H1 (cell line): ENCODE measurements at regions of chr2 and their contacts with region 1.

Region 1: DNA sequence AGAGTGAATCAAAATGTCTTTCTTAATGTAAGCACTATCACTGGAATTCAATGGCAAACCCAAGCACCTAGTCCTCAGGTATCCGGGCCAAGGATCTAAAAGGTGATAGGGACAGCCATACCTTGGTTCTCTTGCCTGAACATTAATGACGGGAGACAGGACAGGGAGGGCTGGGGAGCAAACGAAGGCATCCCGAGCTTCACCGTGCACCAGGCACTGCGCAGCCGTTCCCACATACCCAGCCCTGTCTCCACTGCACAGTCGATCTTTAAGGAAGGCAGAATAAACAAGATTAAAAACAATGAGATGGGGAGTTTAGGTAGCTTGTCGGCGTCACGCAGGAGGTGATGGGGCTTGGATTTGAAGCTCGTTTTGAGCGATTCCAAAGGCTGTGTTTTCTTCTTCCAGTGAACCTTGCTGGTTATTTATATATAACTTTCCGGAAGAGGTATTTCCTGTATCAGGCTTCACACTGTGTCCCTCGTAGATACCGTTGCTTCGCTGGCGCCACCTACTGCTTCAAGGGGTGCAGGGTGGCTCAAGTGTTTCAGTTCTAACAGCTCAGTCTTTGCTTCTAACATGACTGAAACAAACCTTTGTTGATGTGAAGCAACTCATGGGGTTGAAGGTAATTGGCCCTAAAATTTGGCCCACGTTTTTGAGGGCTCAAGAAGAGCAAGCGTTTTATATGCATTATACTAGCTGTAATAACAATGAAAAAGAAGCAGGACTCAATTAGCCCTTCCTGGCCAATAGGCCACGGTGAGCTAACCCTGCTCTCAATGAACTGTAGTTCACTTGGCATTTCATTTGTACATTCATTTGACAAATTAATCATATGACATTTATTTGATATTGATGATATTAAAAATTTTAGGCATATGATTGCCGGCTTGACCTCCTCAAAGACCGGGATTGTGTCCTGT is 77.4 kb downstream of the DCDC2C start:
- DNase-seq: peak in 1 of 2 experiments; percentile 72
- H3K4me3 ChIP-seq: no peak overlapping the region
- H3K27ac ChIP-seq: no peak overlapping the region
- H3K4me1 ChIP-seq: peaks cover 0 to 9% (median 4%) of the 10 kb centered on the region in 4 experiments; a peak in 3 of 7 replicates
- H3K27me3 ChIP-seq: no peaks in the 10 kb centered on the region
- CTCF ChIP-seq: peak; percentile 73 to 85 (median 81)
- EP300 ChIP-seq: no peak
- POLR2A ChIP-seq: no peak
- RAD21 ChIP-seq: peak; percentile 67 to 74

Region 2: GRCh38 chr2:3493615-3494007 is 287.1 kb before region 1 on chr2:
- CTCF ChIA-PET with region 1: no interaction called
- POLR2A ChIA-PET with region 1: no interaction called
- DNase-seq: peak in 1 of 2 experiments; percentile 21
- H3K4me3 ChIP-seq: no peak overlapping the region
- H3K27ac ChIP-seq: no peak overlapping the region
- H3K4me1 ChIP-seq: peaks cover 0 to 9% (median 7%) of the 10 kb centered on the region in 4 experiments; a peak in 5 of 7 replicates
- H3K27me3 ChIP-seq: no peaks in the 10 kb centered on the region
- CTCF ChIP-seq: no peak
- EP300 ChIP-seq: no peak
- POLR2A ChIP-seq: no peak
- RAD21 ChIP-seq: no peak

Region 3: DNA sequence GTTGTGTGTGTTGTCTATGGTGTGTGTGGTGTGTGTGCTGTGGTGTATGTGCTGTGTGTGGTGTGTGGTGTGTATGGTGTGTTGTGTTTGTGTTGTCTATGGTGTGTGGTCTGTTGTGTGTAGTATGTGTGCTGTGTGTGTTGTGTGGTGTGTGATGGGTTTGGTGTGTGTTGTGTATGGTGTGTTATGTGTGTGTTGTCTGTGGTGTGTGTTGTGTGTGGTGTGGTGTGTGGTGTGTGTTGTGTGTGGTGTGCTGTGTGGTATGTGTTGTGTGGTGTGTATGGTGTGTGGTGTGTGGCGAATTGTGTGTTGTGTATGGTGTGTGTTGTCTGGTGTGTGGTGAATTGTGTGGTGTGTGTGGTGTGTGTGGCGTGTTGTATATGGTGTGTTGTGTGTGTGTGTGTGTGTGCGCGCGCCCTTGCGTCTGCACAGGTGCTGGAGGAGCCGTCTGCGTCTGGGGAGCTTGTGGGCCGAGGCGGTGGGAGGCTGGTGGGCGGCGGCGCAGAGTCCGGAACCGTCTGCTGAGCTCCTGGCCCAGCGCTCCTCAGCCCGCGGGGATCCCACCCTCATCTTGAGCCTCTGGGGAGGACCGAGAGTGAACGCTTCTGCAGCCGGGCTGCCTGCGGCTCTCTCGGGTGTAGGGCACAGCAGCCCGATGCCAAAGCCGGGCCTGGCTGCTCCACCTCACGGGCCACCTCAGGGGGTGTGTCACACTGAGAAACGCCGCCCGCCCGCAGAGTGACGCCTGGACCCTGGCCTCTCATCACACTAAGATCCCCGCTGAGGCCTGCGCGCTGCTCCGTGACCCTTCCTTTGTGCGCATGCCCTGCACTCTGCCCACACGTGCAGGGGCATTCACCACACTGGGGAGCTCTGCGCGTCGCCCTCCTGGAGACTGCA is 252.6 kb before region 1 on chr2:
- CTCF ChIA-PET with region 1: no interaction called
- POLR2A ChIA-PET with region 1: no interaction called
- DNase-seq: peak in 1 of 2 experiments; percentile 32
- H3K4me3 ChIP-seq: no peak overlapping the region
- H3K27ac ChIP-seq: no peak overlapping the region
- H3K4me1 ChIP-seq: peaks cover 0 to 4% (median 0%) of the 10 kb centered on the region in 4 experiments; a peak in 1 of 7 replicates
- H3K27me3 ChIP-seq: no peaks in the 10 kb centered on the region
- CTCF ChIP-seq: no peak
- EP300 ChIP-seq: no peak
- POLR2A ChIP-seq: no peak
- RAD21 ChIP-seq: no peak

Region 4: GRCh38 chr2:3628800-3629199 is 151.9 kb before region 1 on chr2:
- CTCF ChIA-PET with region 1: no interaction called
- POLR2A ChIA-PET with region 1: no interaction called
- DNase-seq: peak; percentile 21 to 78
- H3K4me3 ChIP-seq: no peak overlapping the region
- H3K27ac ChIP-seq: no peak overlapping the region
- H3K4me1 ChIP-seq: no peaks in the 10 kb centered on the region; a peak in 2 of 7 replicates
- H3K27me3 ChIP-seq: no peaks in the 10 kb centered on the region; a peak in 1 of 7 replicates
- CTCF ChIP-seq: peak in 2 of 3 experiments; percentile 57 to 78; a peak in 3 of 4 replicates
- EP300 ChIP-seq: no peak
- POLR2A ChIP-seq: no peak
- RAD21 ChIP-seq: peak; percentile 64 to 71

Region 5: DNA sequence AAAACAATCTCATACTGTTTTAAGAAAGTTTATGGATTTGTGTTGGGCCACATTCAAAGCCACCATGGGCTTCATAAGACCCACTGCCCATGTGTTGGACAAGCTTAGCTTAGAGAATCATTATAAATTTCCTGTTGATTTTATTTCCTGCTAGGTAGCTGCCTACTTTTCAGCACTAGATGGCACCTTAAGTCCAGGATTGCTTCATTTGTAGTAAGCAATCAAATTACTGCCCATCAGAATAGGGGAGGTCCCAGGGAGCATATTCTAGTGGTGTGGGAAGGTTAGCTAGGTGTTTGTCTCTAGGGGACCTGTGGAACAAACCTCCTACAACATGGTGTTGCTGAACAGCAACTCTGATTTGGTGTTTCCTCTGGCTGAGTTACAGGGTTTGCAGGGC is 88.4 kb before region 1 on chr2:
- CTCF ChIA-PET with region 1: interaction called, 11 read pairs
- POLR2A ChIA-PET with region 1: no interaction called
- DNase-seq: peak in 1 of 2 experiments; percentile 48
- H3K4me3 ChIP-seq: no peak overlapping the region
- H3K27ac ChIP-seq: no peak overlapping the region
- H3K4me1 ChIP-seq: no peaks in the 10 kb centered on the region
- H3K27me3 ChIP-seq: no peaks in the 10 kb centered on the region; a peak in 1 of 7 replicates
- CTCF ChIP-seq: peak in 2 of 3 experiments; percentile 67 to 75; a peak in 3 of 4 replicates
- EP300 ChIP-seq: no peak
- POLR2A ChIP-seq: no peak
- RAD21 ChIP-seq: peak; percentile 94

Region 6: DNA sequence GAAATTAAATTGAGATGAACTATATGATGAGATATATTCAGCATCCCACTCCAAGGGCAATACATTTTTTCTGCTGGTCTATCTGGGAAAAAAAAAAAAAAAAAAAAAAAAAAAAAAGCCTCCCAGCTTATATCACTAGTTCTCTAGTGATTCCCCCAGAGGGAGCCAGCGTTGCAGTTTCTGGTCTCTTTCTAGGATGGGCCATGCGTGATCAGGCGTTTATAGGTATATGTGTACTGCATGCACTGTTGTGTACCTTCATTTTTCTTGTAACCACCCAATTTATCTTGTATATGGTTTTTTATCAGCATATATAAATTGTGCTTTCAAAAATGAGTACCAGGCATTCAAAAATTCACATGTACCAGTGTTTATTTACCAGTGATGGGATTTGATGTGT is 42.3 kb before region 1 on chr2:
- CTCF ChIA-PET with region 1: interaction called, 63 read pairs
- POLR2A ChIA-PET with region 1: no interaction called
- DNase-seq: no peak
- H3K4me3 ChIP-seq: no peak overlapping the region
- H3K27ac ChIP-seq: no peak overlapping the region
- H3K4me1 ChIP-seq: no peaks in the 10 kb centered on the region
- H3K27me3 ChIP-seq: no peaks in the 10 kb centered on the region; a peak in 1 of 7 replicates
- CTCF ChIP-seq: peak; percentile 24 to 76 (median 51)
- EP300 ChIP-seq: no peak
- POLR2A ChIP-seq: no peak
- RAD21 ChIP-seq: peak; percentile 78 to 79

Region 7: DNA sequence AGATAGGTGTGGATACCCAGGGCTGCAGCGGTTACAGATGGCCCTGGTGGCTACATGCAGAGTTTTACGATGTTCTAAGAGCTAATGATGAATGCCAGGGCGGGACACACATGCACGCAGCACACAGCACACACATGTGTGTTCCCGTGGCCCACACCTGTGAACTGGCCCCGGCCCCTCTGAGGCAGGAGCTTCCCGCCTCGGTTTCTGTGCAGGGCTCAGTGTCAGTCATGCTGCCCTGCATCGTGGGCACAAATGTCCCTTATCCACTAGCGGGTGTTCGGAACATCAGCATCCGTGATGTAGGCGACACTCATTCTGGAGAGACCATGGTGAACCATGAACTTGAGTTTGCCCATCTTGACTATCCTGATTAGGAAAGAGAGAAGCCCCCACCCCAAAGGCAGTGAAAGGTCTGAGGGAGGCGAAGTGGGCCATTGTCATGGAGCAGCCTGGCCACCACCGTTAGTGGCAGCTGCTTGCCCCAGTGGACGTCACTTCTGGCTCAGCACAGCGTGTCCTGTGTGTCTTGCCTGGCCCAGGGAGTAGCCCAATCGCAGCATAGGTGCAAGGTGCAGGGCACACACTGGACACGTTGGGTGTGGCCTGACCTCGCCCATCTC is 33.6 kb before region 1 on chr2:
- CTCF ChIA-PET with region 1: interaction called, 63 read pairs
- POLR2A ChIA-PET with region 1: no interaction called
- DNase-seq: no peak
- H3K4me3 ChIP-seq: no peak overlapping the region
- H3K27ac ChIP-seq: no peak overlapping the region
- H3K4me1 ChIP-seq: no peaks in the 10 kb centered on the region
- H3K27me3 ChIP-seq: no peaks in the 10 kb centered on the region
- CTCF ChIP-seq: no peak
- EP300 ChIP-seq: no peak
- POLR2A ChIP-seq: no peak
- RAD21 ChIP-seq: no peak

Region 8: DNA sequence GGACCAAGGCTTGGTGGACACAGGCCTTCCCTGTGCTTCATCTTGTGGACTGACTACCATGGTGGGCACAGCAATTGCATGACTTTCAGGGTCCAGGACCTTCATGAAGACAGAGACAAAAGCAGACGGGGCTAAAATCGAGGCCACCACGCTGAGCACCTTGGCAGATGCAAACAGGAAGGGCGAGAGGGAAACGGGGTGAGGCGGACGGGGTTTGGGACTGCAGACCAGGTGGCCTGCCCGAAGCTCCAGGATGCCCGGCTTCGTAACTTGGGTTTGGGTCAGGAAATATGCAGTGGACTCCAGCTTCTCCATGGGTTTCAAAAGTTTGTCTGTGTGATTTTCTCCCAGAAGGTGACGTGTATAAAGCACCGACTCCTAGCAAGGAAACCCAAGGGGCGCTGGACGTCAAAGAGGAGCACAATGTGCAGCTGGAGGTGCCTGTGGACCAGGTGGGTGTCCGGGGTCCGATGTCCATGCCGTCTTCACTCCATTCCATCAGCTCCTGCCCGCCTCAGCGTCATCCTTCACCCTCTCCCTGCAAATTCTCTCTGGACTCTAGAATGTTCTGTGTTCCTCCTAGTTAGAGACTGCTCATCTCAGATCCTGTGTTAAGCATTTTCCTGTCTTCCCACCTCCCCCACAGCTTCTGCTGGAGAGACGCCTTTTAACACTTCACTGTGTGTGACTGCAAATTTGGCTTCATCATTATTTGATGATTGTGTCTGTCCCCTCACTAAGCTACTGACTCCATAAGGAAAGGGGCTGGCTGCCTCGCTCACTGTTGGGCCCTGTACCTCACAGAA is 11.6 kb before region 1 on chr2:
- CTCF ChIA-PET with region 1: interaction called, 16 read pairs
- POLR2A ChIA-PET with region 1: no interaction called
- DNase-seq: no peak
- H3K4me3 ChIP-seq: no peak overlapping the region
- H3K27ac ChIP-seq: no peak overlapping the region
- H3K4me1 ChIP-seq: no peaks in the 10 kb centered on the region
- H3K27me3 ChIP-seq: no peaks in the 10 kb centered on the region; a peak in 1 of 7 replicates
- CTCF ChIP-seq: no peak
- EP300 ChIP-seq: no peak
- POLR2A ChIP-seq: no peak
- RAD21 ChIP-seq: no peak

Region 9: GRCh38 chr2:3805201-3805939 is 24.6 kb after region 1 on chr2:
- CTCF ChIA-PET with region 1: interaction called, 25 read pairs
- POLR2A ChIA-PET with region 1: interaction called, 3 read pairs
- DNase-seq: peak in 1 of 2 experiments; percentile 83
- H3K4me3 ChIP-seq: no peak overlapping the region
- H3K27ac ChIP-seq: no peak overlapping the region
- H3K4me1 ChIP-seq: no peaks in the 10 kb centered on the region
- H3K27me3 ChIP-seq: no peaks in the 10 kb centered on the region
- CTCF ChIP-seq: peak; percentile 76 to 87 (median 82)
- EP300 ChIP-seq: no peak
- POLR2A ChIP-seq: no peak
- RAD21 ChIP-seq: peak; percentile 70 to 73

Region 10: DNA sequence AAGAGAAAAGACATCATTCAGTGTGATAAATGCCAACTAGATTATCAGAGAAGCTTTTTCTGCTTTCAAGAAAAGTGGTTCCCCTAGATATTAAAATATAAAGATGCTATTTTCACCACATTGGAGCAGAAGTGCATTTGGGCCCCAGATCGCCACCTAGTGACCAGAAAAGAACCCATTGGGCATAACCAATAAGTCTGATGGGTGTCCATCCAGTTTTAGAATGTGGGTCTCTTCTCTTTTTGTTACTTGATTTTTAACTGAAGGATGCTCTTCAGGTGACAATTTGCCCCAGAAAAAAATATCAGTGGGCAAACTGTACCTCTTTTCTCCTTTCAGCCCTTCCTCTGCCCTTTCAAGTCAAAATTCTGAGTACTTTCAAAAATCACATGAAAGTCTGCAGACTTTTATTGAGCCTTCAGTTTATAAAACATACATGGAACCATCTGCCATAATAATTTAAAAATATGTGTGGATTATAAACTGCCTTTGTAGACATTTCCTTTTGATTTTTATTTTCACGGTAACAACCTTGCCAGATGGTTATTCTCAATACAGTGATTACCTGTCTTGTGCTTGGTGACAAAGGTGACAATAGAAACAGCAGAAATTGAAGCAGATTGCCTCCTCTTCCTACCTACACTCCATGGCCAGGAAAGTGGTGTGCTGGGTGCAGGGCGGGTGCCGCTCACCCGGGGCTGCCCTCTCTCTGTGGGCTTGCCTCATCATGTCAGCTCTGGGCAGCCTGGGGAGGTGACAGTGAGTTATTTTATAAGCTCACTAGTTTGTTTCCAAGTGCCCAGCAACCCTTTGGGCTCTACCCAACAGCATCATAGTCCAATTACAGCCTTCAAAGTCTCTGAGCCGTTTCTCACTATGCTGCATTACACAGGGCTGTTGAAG is 47.2 kb after region 1 on chr2:
- CTCF ChIA-PET with region 1: interaction called, 11 read pairs
- POLR2A ChIA-PET with region 1: no interaction called
- DNase-seq: no peak
- H3K4me3 ChIP-seq: no peak overlapping the region
- H3K27ac ChIP-seq: no peak overlapping the region
- H3K4me1 ChIP-seq: no peaks in the 10 kb centered on the region
- H3K27me3 ChIP-seq: no peaks in the 10 kb centered on the region
- CTCF ChIP-seq: peak; percentile 32 to 69 (median 58)
- EP300 ChIP-seq: no peak
- POLR2A ChIP-seq: no peak
- RAD21 ChIP-seq: peak; percentile 54 to 65

Region 11: DNA sequence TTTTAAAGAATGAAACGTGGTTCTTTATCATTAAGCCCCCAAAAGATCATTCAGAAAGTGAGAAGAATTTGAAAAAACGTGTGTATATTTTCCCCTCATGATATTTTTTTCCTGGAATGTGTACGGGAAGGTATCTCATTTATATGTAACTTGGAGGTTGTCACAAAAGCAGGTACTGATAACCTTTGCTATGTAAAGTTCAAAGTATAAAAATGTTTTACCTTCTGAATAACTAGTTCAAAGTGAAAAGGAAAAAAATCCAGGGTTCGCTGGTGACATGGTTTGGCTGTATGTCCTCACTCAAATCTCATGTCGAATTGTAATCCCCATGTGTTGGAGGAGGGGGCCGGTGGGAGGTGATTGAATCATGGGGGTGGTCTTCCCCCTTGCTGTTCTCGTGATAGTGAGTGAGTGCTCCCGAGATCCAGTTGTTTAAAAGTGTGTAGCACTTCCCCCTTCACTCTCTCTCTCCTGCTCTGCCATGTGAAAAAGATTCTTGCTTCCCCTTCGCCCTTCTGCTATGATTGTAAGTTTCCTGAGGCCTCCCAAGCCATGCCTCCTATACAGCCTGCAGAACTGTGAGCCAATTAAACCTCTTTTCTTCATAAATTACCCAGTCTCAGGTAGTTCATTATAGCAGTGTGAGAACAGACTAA is 66.8 kb after region 1 on chr2:
- CTCF ChIA-PET with region 1: no interaction called
- POLR2A ChIA-PET with region 1: no interaction called
- DNase-seq: no peak
- H3K4me3 ChIP-seq: no peak overlapping the region
- H3K27ac ChIP-seq: no peak overlapping the region
- H3K4me1 ChIP-seq: no peaks in the 10 kb centered on the region
- H3K27me3 ChIP-seq: no peaks in the 10 kb centered on the region
- CTCF ChIP-seq: no peak
- EP300 ChIP-seq: no peak
- POLR2A ChIP-seq: no peak
- RAD21 ChIP-seq: no peak